CD4-positive, alpha-beta T cell (primary cell): ENCODE measurements at regions of chr10 and their contacts with region 1.

Region 1: GRCh38 chr10:33155720-33156638 is 178.5 kb downstream of the NRP1 start:
- DNase-seq: peak in 8 of 14 experiments; percentile 17 to 83 (median 50)
- ATAC-seq: peak; percentile 83
- H3K4me3 ChIP-seq: no peak overlapping the region
- H3K4me3 Mint-ChIP-seq: peak overlapping the region; percentile 26
- H3K27ac ChIP-seq: no peak overlapping the region
- H3K27ac Mint-ChIP-seq: peak overlapping the region; percentile 15
- H3K4me1 ChIP-seq: peaks cover 44% of the 10 kb centered on the region
- H3K4me1 Mint-ChIP-seq: peaks cover 48% of the 10 kb centered on the region
- H3K27me3 ChIP-seq: no peaks in the 10 kb centered on the region
- H3K27me3 Mint-ChIP-seq: no peaks in the 10 kb centered on the region
- CTCF ChIP-seq: peak; percentile 64

Region 2: DNA sequence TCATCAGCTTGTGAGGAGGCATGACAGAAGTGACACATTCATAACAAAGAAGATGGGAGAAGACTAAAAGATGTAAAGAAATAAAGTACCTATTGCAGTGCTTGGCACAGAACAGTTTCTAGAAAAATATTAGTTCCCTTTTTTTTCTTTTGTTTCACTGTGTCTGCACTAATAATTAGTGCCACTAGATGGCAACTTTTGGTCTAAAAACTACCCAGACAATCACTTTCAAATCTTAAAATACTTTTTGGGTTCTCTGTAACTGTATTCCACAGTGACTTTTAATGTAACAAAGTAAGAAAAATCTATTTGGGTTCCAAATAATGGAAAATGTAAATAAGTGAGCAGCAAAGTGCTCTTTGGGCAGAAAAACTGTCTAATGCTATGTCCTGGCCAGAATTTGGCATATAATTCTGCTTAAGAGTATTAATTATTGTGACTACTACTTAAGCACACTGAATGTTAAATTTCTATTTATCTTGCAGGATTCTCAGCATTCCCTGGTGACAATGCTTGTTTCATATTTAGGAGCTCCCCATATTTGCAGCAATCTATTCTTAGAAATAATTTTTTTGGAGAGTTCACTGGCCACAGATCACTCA is 965.0 kb before region 1 on chr10:
- CTCF ChIA-PET with region 1: no interaction called
- POLR2A ChIA-PET with region 1: no interaction called
- intact Hi-C with region 1: loop called in 1 of 2 experiments (anchors 5 kb)
- DNase-seq: peak in 3 of 14 experiments; percentile 53 to 68 (median 64)
- ATAC-seq: peak; percentile 63
- H3K4me3 ChIP-seq: no peak overlapping the region
- H3K4me3 Mint-ChIP-seq: no peak overlapping the region
- H3K27ac ChIP-seq: no peak overlapping the region
- H3K27ac Mint-ChIP-seq: no peak overlapping the region
- H3K4me1 ChIP-seq: no peaks in the 10 kb centered on the region
- H3K4me1 Mint-ChIP-seq: peaks cover 4% of the 10 kb centered on the region
- H3K27me3 ChIP-seq: no peaks in the 10 kb centered on the region
- H3K27me3 Mint-ChIP-seq: peaks cover 5% of the 10 kb centered on the region
- CTCF ChIP-seq: peak; percentile 84

Region 3: GRCh38 chr10:32650246-32650655 is 505.7 kb before region 1 on chr10:
- CTCF ChIA-PET with region 1: no interaction called
- POLR2A ChIA-PET with region 1: no interaction called
- intact Hi-C with region 1: loop called in 1 of 2 experiments (anchors 10 kb)
- DNase-seq: peak in 4 of 14 experiments; percentile 9 to 43 (median 30)
- ATAC-seq: peak; percentile 56
- H3K4me3 ChIP-seq: no peak overlapping the region
- H3K4me3 Mint-ChIP-seq: no peak overlapping the region
- H3K27ac ChIP-seq: no peak overlapping the region
- H3K27ac Mint-ChIP-seq: no peak overlapping the region
- H3K4me1 ChIP-seq: peaks cover 10% of the 10 kb centered on the region
- H3K4me1 Mint-ChIP-seq: peaks cover 15% of the 10 kb centered on the region
- H3K27me3 ChIP-seq: no peaks in the 10 kb centered on the region
- H3K27me3 Mint-ChIP-seq: no peaks in the 10 kb centered on the region
- CTCF ChIP-seq: no peak

Region 4: GRCh38 chr10:33115738-33116719 is 40.0 kb before region 1 on chr10:
- CTCF ChIA-PET with region 1: interaction called, 14 read pairs
- POLR2A ChIA-PET with region 1: interaction called, 33 read pairs
- intact Hi-C with region 1: loop called (anchors 1 to 5 kb)
- DNase-seq: peak in 4 of 14 experiments; percentile 51 to 74 (median 66)
- ATAC-seq: peak; percentile 28
- H3K4me3 ChIP-seq: peak overlapping the region; percentile 50
- H3K4me3 Mint-ChIP-seq: peak overlapping the region; percentile 70
- H3K27ac ChIP-seq: peak overlapping the region; percentile 38 to 79
- H3K27ac Mint-ChIP-seq: peak overlapping the region; percentile 88
- H3K4me1 ChIP-seq: peaks cover 72% of the 10 kb centered on the region
- H3K4me1 Mint-ChIP-seq: peaks cover 91% of the 10 kb centered on the region
- H3K27me3 ChIP-seq: no peaks in the 10 kb centered on the region
- H3K27me3 Mint-ChIP-seq: no peaks in the 10 kb centered on the region
- CTCF ChIP-seq: peak; percentile 47

Region 5: DNA sequence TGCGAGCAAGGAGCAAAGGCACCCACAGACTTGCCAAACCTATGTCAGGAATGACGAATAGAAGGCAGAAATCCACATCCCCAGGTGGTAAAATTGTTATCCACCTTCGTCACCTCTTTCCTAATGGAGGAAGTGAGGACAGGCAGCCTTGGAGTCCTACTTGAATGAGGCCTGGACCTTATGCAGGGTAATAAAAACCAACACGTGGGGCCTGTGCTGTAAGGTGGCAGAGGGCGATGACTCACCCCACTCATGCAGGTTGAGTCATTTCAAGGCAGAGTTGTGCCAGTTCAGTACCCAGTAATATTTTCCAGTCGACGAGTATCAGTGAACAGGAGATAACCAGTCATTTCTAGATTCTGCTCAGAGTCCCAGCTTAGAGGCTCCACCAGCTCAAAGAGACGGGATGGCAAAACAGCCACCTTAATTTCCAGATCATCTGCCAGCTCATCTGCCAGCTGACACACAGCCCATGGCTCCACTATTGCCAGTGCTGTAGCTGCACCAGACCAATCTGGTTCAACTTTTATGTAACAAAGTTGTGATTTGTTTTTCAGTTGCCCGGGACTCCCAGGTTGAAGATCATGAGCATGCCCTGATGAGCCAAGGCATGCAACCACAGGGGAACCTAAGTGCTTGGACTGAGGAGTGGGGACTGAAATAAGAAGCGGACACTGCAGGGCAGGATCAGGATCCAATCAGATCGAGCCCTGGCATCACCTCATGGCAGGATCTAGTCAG is 21.8 kb before region 1 on chr10:
- CTCF ChIA-PET with region 1: interaction called, 12 read pairs
- POLR2A ChIA-PET with region 1: interaction called, 30 read pairs
- intact Hi-C with region 1: loop called in 1 of 2 experiments (anchors 2 kb)
- DNase-seq: peak in 13 of 14 experiments; percentile 49 to 90 (median 65)
- ATAC-seq: peak; percentile 67
- H3K4me3 ChIP-seq: no peak overlapping the region
- H3K4me3 Mint-ChIP-seq: peak overlapping the region; percentile 62
- H3K27ac ChIP-seq: peak overlapping the region; percentile 42 to 70
- H3K27ac Mint-ChIP-seq: peak overlapping the region; percentile 93
- H3K4me1 ChIP-seq: peaks cover 91% of the 10 kb centered on the region
- H3K4me1 Mint-ChIP-seq: peaks cover 88% of the 10 kb centered on the region
- H3K27me3 ChIP-seq: no peaks in the 10 kb centered on the region
- H3K27me3 Mint-ChIP-seq: no peaks in the 10 kb centered on the region
- CTCF ChIP-seq: no peak

Region 6: GRCh38 chr10:34063592-34063991 is 907.6 kb after region 1 on chr10:
- CTCF ChIA-PET with region 1: no interaction called
- POLR2A ChIA-PET with region 1: no interaction called
- intact Hi-C with region 1: no loop called
- DNase-seq: no peak
- ATAC-seq: no peak
- H3K4me3 ChIP-seq: no peak overlapping the region
- H3K4me3 Mint-ChIP-seq: no peak overlapping the region
- H3K27ac ChIP-seq: no peak overlapping the region
- H3K27ac Mint-ChIP-seq: no peak overlapping the region
- H3K4me1 ChIP-seq: no peaks in the 10 kb centered on the region
- H3K4me1 Mint-ChIP-seq: no peaks in the 10 kb centered on the region
- H3K27me3 ChIP-seq: no peaks in the 10 kb centered on the region
- H3K27me3 Mint-ChIP-seq: peaks cover 4% of the 10 kb centered on the region
- CTCF ChIP-seq: no peak